ENCODE measurements at regions of chr20 and their contacts with region 1.

Region 1: GRCh38 chr20:1503564-1504227 is 12.5 kb upstream of the SIRPB2 start:
- DNase-seq: peak; percentile 96
- H3K4me3 ChIP-seq: no peak overlapping the region
- H3K27ac ChIP-seq: no peak overlapping the region
- H3K4me1 ChIP-seq: no peaks in the 10 kb centered on the region
- H3K27me3 ChIP-seq: peaks cover 15 to 30% of the 10 kb centered on the region in 2 experiments
- CTCF ChIP-seq: peak; percentile 98 to 100
- POLR2A ChIP-seq: no peak

Region 2: DNA sequence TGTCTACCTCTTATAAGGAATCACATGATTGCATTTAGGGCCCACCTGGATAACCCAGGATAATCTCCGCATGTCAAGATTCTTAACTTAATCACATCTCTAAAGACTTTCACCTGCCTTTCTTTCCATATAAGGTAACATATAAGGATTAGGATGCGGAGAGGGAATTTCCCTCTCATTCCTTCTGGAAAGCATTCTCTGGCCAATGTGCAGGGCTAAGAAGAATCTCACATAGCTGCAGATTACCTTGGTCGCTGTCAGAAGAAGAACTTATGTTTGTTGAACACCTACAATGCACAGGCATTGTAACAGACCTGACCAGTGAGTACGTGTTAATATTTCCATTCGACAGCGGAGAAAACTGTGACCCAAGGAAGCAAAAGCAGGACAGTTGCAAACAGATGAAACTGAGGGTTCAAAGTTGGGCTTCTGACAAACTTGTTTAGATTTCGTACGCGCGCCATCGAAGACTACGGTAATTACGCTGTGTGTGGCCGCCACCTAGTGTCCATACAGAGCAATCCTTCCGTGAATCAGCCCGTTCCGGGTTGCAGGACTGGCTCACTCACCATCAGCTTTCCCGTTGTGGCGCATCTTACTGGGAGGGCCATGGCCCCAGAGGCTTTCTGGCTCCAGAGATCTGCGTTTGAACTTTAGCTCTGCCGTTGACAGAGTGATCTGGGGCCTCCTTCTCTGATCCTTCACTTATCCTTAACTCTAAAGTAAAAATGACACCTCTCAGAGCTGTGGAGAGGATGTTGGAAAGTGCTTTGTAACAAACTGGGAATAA is 290.9 kb before region 1 on chr20:
- CTCF ChIA-PET with region 1: interaction called, 32 read pairs
- POLR2A ChIA-PET with region 1: no interaction called
- dilution Hi-C with region 1: no loop called
- intact Hi-C with region 1: loop called (anchors 1 kb)
- DNase-seq: peak; percentile 63
- H3K4me3 ChIP-seq: no peak overlapping the region
- H3K27ac ChIP-seq: no peak overlapping the region
- H3K4me1 ChIP-seq: no peaks in the 10 kb centered on the region
- H3K27me3 ChIP-seq: peaks cover 8 to 39% of the 10 kb centered on the region in 2 experiments
- CTCF ChIP-seq: peak; percentile 81 to 91
- POLR2A ChIP-seq: no peak

Region 3: GRCh38 chr20:1437235-1437904 is 66.3 kb before region 1 on chr20:
- CTCF ChIA-PET with region 1: interaction called, 38 read pairs
- POLR2A ChIA-PET with region 1: no interaction called
- dilution Hi-C with region 1: no loop called
- intact Hi-C with region 1: loop called (anchors 1 kb)
- DNase-seq: peak; percentile 80
- H3K4me3 ChIP-seq: no peak overlapping the region
- H3K27ac ChIP-seq: no peak overlapping the region
- H3K4me1 ChIP-seq: peaks cover 18% of the 10 kb centered on the region
- H3K27me3 ChIP-seq: no peaks in the 10 kb centered on the region
- CTCF ChIP-seq: peak; percentile 82 to 85
- POLR2A ChIP-seq: no peak

Region 4: DNA sequence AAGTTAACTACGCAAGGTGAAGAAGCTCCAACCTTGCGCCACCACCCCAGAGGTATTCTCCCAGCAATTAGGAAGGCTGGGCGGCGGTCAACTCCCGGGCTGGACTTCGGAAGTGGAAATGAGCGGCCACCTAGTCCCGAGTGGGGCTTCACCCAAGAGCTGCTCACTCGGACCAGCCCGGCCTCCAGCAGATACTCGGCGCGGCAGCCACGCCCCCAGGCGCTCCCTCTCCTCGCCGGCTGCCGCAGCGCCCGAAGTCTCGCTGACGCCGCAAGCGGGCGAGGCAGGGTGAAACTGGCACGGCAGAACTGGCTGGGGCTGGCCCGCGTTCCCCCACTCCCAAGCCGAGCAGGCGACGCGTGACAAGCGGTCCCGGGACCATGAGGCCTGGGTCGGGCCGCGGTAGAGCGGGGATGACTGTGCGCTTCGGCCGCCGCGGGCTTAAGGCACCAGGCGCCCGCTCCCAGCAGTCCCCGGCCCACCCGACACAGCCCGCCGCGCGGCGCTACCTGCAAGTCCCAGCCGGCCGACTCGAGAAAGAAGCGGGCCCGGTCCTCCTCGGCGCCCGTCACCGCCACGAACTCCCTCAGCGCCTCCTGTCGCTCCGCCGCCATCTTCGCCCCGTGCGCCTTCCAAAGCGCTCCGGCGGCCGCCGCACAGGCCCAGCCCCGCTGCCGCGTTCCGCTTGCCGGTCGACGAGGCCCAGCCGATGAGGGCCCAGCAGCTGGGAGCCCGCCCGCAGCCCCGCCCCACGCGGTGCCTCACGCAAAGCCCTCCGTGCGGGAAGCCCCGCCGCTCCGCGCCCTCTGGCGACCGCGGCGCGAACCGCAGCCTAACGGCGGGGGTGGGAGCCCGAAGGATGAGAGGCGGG is 37.2 kb before region 1 on chr20 and contains the start of gene NSFL1C:
- CTCF ChIA-PET with region 1: interaction called, 229 read pairs
- POLR2A ChIA-PET with region 1: no interaction called
- dilution Hi-C with region 1: no loop called
- intact Hi-C with region 1: loop called (anchors 1 kb)
- DNase-seq: peak; percentile 94
- H3K4me3 ChIP-seq: peak within 1 kb of the TSS; percentile 51 to 95 (median 75)
- H3K27ac ChIP-seq: peak within 1 kb of the TSS; percentile 78
- H3K4me1 ChIP-seq: peaks cover 35% of the 10 kb centered on the region
- H3K27me3 ChIP-seq: no peaks in the 10 kb centered on the region
- CTCF ChIP-seq: peak; percentile 69 to 91
- POLR2A ChIP-seq: peak; percentile 76
- total RNA-seq, gene NSFL1C: 95.7 and 107 TPM in 2 replicates

Region 5: DNA sequence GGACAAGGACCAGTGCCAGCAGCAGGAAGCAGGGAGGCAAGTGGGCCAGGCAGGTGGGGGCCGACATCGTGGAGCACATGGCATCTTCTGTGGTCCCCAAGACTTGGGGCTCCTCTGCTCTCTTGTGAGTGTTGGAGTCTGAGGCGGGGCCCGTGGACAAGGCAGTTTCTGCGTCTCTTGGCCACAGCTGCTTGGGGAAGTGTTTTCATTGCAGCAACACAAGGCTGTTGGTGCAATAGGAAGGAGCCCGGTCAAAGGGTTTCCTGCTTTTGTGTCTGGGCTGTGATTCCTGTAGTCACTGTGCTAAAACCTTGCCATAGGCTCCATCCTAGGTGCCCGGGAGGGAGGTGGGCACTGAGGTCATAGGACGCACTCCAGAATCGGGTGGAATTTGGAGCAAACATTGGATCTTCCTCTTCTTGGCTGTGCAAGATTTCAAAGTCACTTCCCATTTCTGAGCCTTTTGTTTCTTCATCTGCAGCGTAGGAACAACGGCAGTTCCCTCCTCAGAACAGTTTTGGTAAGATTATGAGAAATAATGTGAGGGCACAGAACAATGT is 12.3 kb before region 1 on chr20 and contains the start of gene SIRPB2:
- CTCF ChIA-PET with region 1: interaction called, 77 read pairs
- POLR2A ChIA-PET with region 1: no interaction called
- dilution Hi-C with region 1: no loop called
- intact Hi-C with region 1: loop called (anchors 1 kb)
- DNase-seq: peak; percentile 96
- H3K4me3 ChIP-seq: peak within 1 kb of the TSS in 2 of 3 experiments; percentile 25 to 47
- H3K27ac ChIP-seq: peak within 1 kb of the TSS; percentile 90
- H3K4me1 ChIP-seq: peaks cover 31% of the 10 kb centered on the region
- H3K27me3 ChIP-seq: peaks cover 0 to 2% of the 10 kb centered on the region in 2 experiments
- CTCF ChIP-seq: no peak
- POLR2A ChIP-seq: peak; percentile 30
- total RNA-seq, gene SIRPB2: 9.5 and 12.3 TPM in 2 replicates

Region 6: DNA sequence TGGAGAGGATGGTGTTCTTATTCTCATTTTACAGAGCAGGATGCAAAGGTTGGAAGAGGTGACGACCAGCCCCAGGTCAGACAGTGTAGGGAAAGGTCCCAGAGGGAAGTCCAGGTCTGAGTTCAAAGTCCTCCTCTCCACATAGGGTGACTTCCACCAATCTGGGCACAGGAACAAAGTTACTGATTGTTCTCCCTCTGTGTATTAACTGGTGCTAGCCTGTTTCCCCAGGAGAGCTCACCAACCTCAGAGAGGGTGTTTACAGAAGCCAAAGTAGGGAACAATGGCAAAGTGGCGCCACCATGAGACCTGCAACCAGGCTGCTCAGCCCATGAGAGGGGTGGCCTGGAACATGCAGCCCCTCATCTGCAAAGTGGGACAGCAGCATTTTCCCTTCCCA is 132.9 kb after region 1 on chr20:
- CTCF ChIA-PET with region 1: interaction called, 11 read pairs
- POLR2A ChIA-PET with region 1: no interaction called
- dilution Hi-C with region 1: no loop called
- intact Hi-C with region 1: no loop called
- DNase-seq: no peak
- H3K4me3 ChIP-seq: no peak overlapping the region
- H3K27ac ChIP-seq: no peak overlapping the region
- H3K4me1 ChIP-seq: peaks cover 2% of the 10 kb centered on the region
- H3K27me3 ChIP-seq: peaks cover 0 to 2% of the 10 kb centered on the region in 2 experiments
- CTCF ChIP-seq: peak in 1 of 2 donors; percentile 9
- POLR2A ChIP-seq: no peak

Region 7: DNA sequence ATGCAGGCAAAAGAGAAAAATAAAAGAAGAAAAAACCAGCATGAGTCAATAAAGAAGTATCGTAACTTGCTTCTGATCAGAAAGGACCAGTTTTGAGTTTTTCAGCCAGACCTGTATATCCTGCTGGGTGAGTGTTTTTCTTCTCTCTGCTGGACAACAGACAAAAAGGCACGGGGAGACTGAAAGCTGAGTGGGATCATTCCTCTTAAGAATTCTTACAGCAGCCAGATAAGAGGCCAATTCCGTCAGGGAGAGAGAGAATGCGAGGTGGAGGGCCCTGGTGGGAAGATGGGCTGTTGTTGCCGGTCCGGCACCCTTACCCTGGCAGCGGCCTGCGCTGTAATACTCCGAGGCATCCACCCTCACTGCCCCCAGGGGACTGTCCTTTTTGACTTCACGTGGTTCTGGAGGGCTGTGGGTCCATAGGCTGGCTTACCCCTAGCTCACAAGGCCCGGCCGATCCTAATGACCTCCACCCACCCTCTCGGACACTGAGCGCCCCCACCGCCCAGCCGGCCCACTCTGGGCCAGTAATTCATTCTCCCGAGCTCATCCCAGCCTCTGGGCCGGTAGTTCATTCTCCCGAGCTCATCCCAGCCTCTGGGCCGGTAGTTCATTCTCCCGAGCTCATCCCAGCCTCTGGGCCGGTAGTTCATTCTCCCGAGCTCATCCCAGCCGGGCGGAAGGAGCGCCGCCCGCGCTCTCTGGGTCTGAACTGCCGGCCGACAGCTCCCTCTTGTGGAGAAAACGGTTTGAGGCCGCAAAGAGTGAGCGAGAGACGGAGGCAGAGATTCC is 273.2 kb after region 1 on chr20:
- CTCF ChIA-PET with region 1: interaction called, 79 read pairs
- POLR2A ChIA-PET with region 1: no interaction called
- dilution Hi-C with region 1: no loop called
- intact Hi-C with region 1: loop called (anchors 1 kb)
- DNase-seq: peak; percentile 81
- H3K4me3 ChIP-seq: peak overlapping the region; percentile 41 to 88 (median 77)
- H3K27ac ChIP-seq: peak overlapping the region; percentile 38
- H3K4me1 ChIP-seq: peaks cover 7% of the 10 kb centered on the region
- H3K27me3 ChIP-seq: peaks cover 0 to 6% of the 10 kb centered on the region in 2 experiments
- CTCF ChIP-seq: peak; percentile 67 to 85
- POLR2A ChIP-seq: peak; percentile 26

Measured in endothelial cell of umbilical vein (primary cell).